Caki2 (cell line): ENCODE measurements at regions of chr6 and their contacts with region 1.

Region 1: GRCh38 chr6:170257376-170257775 is 33.5 kb downstream of the DLL1 start:
- DNase-seq: no peak

Region 2: DNA sequence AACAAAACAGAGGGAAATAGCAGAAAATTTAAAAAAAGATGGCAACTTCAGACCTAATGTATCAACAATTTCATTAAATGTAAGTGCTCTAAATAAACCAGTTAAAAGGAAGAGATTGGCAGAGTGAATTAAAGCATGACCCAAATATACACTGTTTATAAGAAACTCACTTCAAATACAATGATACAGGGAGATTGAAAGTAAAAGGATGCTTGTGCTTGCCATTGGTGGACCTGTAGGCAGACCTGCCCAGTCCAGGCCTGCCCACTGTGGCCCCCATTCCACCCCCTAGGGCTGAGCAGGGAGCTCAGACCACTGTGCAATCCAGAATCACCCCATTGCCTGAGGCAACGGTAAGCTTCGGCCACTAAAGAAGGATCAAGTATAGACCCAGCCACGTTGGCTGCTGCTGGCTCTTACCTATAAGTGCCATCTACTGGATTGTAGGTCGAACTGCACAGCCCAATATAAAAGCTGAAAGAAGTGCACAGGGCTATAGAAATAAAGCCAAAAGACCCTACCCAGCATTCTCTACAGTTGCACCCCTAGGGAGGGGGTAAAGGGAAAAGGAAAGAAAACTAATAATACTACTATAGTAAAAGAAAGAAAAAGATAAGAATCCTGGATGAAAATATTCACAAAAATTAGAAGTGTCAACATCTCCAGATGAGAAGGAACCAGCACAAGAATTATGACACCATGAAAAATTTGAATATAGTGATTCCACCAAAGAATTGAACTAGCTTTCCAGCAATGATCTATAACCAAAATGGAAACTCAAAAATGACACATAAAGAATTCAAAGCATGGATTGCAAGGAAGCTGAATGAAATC is 259.6 kb after region 1 on chr6:
- in situ Hi-C with region 1: loop called (anchors 10 kb)
- DNase-seq: peak; percentile 54